Activated naive CD4-positive, alpha-beta T cell treated with anti-CD3 and anti-CD28 coated beads for 36 hours (primary cell): ENCODE measurements at regions of chr1 and their contacts with region 1.

Region 1: DNA sequence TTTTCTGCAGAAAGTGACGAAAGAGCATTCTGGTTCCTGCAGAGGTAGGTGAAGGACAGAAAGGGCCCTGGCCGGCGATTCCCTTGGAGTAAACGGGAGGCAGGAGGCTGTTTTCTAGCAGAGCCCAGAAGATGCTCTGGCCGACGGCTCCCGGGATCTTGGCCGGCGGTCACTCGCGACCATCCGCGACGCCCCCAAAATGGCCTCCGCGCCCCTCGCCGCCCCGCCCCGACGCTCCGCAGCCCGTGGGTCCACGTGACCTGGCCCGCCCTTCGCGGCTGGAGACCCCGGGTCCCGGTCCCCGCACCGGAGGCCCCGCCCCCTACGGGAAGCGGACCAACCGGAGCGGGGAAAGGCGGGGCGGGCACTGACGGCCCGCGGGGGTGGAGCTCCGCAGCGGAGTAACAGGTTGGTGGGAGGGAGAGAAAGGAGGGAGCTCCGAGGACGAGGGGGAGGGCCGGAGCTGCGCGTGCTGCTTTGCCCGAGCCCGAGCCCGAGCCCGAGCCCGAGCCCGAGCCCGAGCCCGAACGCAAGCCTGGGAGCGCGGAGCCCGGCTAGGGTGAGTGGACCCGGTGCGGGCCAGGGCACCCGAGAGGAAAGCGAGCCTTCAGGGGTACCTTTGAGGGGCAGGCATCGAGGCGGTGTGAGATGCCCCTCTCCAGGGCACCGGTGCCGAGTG is at the start of gene CGN:
- DNase-seq: peak; percentile 87
- H3K4me3 Mint-ChIP-seq: peak within 1 kb of the TSS; percentile 80
- H3K27ac Mint-ChIP-seq: no peak within 1 kb of the TSS
- H3K4me1 Mint-ChIP-seq: peaks cover 25% of the 10 kb centered on the region
- H3K27me3 Mint-ChIP-seq: no peaks in the 10 kb centered on the region
- total RNA-seq, gene CGN: 0.62 to 1.5 TPM

Region 2: GRCh38 chr1:151459331-151460046 is 51.6 kb before region 1 on chr1 and contains the start of gene POGZ:
- CTCF ChIA-PET with region 1: no interaction called
- intact Hi-C with region 1: loop called (anchors 2 kb)
- DNase-seq: peak; percentile 97
- H3K4me3 Mint-ChIP-seq: peak within 1 kb of the TSS; percentile 78
- H3K27ac Mint-ChIP-seq: peak within 1 kb of the TSS; percentile 86
- H3K4me1 Mint-ChIP-seq: peaks cover 29% of the 10 kb centered on the region
- H3K27me3 Mint-ChIP-seq: peaks cover 11% of the 10 kb centered on the region
- total RNA-seq, gene POGZ: 69.7 to 73.7 TPM

Region 3: GRCh38 chr1:151680812-151681211 is 169.7 kb after region 1 on chr1:
- CTCF ChIA-PET with region 1: no interaction called
- intact Hi-C with region 1: no loop called
- DNase-seq: no peak
- H3K4me3 Mint-ChIP-seq: no peak overlapping the region
- H3K27ac Mint-ChIP-seq: no peak overlapping the region
- H3K4me1 Mint-ChIP-seq: no peaks in the 10 kb centered on the region
- H3K27me3 Mint-ChIP-seq: no peaks in the 10 kb centered on the region